Activated naive CD4-positive, alpha-beta T cell treated with anti-CD3 and anti-CD28 coated beads for 36 hours (primary cell): ENCODE measurements at regions of chr2 and their contacts with region 1.

Region 1: DNA sequence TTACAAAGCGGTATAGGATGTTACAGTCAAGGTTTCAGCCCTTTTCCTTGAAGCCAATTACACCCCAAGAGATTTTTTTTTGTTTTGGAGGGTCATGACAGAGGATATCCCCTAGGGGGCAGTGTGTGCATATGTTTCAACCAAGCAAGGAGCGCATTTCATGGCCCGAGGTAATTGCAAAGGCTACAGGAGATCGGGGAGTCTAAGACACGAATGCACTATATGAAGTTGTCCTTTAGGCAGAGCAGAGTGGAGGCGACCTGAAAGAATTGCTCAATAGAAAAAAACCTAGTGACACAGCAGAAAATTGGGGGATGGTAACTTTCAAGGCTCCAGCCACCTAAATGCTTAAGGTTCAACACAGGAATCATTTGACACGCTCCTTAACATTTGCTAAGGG is 219.8 kb upstream of the PARD3B start:
- DNase-seq: peak; percentile 74
- H3K4me3 Mint-ChIP-seq: no peak overlapping the region
- H3K27ac Mint-ChIP-seq: no peak overlapping the region
- H3K4me1 Mint-ChIP-seq: no peaks in the 10 kb centered on the region
- H3K27me3 Mint-ChIP-seq: no peaks in the 10 kb centered on the region

Region 2: GRCh38 chr2:204072443-204073324 is 252.8 kb before region 1 on chr2:
- CTCF ChIA-PET with region 1: interaction called, 3 read pairs
- intact Hi-C with region 1: loop called (anchors 1 kb)
- DNase-seq: peak; percentile 92
- H3K4me3 Mint-ChIP-seq: no peak overlapping the region
- H3K27ac Mint-ChIP-seq: no peak overlapping the region
- H3K4me1 Mint-ChIP-seq: peaks cover 10% of the 10 kb centered on the region
- H3K27me3 Mint-ChIP-seq: peaks cover 2% of the 10 kb centered on the region

Region 3: DNA sequence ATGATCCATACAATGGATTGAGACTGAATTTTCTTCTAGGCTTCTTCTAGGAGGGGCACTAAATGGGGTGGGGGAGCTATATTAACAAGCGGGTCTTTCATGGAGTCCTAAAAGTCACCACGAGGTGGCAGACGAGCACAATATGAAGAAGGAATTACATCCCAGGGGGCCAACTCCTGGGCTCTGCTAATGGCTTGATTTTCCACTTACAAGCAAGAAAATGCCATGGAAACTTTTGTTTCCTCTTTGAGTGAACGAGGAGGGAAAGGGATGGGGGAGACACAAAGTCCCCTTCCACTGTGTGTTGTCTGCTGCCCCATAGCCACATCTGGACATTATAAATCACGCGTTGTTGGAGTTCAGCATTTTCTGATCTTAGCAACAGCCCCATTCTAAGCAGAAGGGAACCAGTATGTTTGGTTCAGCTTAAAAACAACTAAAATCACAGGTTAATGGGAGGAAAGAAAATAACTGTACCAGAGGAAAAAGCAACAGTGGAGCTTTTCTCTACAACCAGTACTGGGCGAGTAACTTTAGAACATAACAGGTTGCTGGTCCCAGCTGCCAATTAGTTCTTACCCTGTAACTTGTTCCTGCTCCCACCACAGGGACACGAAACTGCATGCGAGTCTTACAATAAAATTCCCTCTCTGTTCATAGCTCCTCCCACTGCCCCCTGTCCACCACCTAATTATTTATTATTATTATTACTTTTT is 65.1 kb before region 1 on chr2:
- CTCF ChIA-PET with region 1: interaction called, 6 read pairs
- intact Hi-C with region 1: loop called (anchors 1 kb)
- DNase-seq: peak; percentile 68
- H3K4me3 Mint-ChIP-seq: no peak overlapping the region
- H3K27ac Mint-ChIP-seq: no peak overlapping the region
- H3K4me1 Mint-ChIP-seq: no peaks in the 10 kb centered on the region
- H3K27me3 Mint-ChIP-seq: peaks cover 16% of the 10 kb centered on the region

Region 4: GRCh38 chr2:204871231-204871953 is 545.9 kb after region 1 on chr2:
- CTCF ChIA-PET with region 1: no interaction called
- intact Hi-C with region 1: loop called (anchors 2 kb)
- DNase-seq: no peak
- H3K4me3 Mint-ChIP-seq: no peak overlapping the region
- H3K27ac Mint-ChIP-seq: no peak overlapping the region
- H3K4me1 Mint-ChIP-seq: peaks cover 31% of the 10 kb centered on the region
- H3K27me3 Mint-ChIP-seq: no peaks in the 10 kb centered on the region

Region 5: GRCh38 chr2:205563646-205564045 is 1238.2 kb after region 1 on chr2:
- CTCF ChIA-PET with region 1: no interaction called
- intact Hi-C with region 1: loop called (anchors 5 kb)
- DNase-seq: peak; percentile 62
- H3K4me3 Mint-ChIP-seq: no peak overlapping the region
- H3K27ac Mint-ChIP-seq: no peak overlapping the region
- H3K4me1 Mint-ChIP-seq: no peaks in the 10 kb centered on the region
- H3K27me3 Mint-ChIP-seq: no peaks in the 10 kb centered on the region

Region 6: DNA sequence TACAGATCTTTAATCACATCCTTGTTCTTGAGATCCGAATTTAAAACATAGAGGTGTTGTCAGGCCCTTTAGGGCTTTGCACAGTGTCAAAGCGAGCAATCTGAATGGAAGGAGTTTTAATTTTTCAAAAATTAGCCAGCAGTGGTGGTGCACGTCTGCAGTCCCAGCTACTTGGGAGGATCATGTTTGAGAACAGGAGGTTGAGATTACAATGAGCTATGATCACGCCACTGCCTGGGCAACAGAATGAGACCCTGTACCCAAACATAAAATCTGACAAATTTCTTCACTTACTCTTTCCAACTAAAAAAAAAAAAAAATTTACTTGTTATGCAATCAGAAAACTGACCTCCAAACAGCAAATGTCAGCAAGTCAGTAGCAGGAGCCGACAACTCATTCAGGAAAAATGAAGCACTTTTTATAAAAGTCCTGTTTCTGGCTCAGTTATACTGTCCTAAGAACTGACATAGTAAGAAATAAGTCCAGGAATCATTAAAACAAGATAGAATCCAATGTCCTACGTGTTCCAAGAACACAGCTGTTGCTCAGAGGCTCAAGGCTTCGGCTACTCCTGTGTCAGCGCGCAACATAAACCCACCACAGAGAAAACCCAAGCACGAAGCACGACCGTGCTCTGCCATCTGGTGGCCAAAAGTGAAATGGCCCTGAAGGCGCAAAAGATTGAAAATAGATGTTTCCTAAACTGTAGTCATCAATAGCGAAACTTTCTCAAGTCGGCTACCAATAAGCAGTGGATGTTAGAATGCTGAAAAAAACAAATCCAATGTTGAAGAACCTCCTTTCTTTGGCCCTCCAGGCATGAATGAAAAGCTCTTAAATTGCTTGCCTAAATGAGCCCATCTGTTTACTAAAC is 1622.4 kb after region 1 on chr2:
- CTCF ChIA-PET with region 1: no interaction called
- intact Hi-C with region 1: loop called (anchors 1 kb)
- DNase-seq: peak; percentile 69
- H3K4me3 Mint-ChIP-seq: no peak overlapping the region
- H3K27ac Mint-ChIP-seq: no peak overlapping the region
- H3K4me1 Mint-ChIP-seq: no peaks in the 10 kb centered on the region
- H3K27me3 Mint-ChIP-seq: peaks cover 6% of the 10 kb centered on the region